ENCODE measurements at regions of chr7 and their contacts with region 1.

Region 1: GRCh38 chr7:122219253-122219865 is 75.3 kb upstream of the AASS start:
- DNase-seq: peak; percentile 38

Region 2: GRCh38 chr7:122528879-122529481 is 309.6 kb after region 1 on chr7:
- in situ Hi-C with region 1: loop called (anchors 25 kb)
- DNase-seq: peak; percentile 30

Region 3: DNA sequence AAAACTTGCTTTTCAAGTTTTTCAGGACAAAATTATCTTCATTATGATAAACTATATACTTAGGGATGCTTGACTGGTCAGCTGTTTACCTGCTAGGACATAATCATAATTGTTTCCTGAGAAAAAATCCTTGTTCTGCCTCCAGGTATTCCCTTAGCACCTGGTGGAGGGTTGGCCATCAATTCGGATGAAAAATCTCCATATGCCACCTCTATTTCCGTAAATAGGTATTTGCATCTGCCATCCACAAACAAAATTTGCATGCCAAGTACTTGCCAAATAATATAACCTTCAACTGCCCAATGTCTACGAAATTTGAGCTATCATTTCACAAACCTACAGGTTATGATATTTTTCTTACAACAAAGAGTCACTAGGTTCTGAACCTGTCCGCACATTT is 353.3 kb after region 1 on chr7:
- in situ Hi-C with region 1: no loop called
- DNase-seq: no peak

Region 4: DNA sequence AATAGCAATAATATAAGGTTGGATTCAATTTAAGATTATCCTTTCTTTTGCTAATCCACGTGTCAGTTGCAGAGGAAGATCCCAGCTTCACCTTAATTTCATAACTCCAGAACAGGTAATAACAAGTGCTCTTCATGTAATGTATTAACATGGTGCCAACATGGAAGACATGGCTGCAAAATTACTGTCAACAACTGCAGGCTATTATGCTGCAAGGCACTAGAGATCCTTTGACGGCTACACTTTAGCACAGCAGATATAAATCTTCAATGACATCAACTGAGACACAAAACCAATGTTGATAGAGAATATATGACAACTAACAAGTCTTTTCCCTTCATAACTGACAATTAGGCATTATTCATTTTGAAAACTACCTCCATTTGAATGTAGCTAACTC is 383.4 kb after region 1 on chr7:
- in situ Hi-C with region 1: no loop called
- DNase-seq: no peak